Prostate gland (tissue), 2 donors: ENCODE measurements at regions of chr6 and their contacts with region 1.

Region 1: DNA sequence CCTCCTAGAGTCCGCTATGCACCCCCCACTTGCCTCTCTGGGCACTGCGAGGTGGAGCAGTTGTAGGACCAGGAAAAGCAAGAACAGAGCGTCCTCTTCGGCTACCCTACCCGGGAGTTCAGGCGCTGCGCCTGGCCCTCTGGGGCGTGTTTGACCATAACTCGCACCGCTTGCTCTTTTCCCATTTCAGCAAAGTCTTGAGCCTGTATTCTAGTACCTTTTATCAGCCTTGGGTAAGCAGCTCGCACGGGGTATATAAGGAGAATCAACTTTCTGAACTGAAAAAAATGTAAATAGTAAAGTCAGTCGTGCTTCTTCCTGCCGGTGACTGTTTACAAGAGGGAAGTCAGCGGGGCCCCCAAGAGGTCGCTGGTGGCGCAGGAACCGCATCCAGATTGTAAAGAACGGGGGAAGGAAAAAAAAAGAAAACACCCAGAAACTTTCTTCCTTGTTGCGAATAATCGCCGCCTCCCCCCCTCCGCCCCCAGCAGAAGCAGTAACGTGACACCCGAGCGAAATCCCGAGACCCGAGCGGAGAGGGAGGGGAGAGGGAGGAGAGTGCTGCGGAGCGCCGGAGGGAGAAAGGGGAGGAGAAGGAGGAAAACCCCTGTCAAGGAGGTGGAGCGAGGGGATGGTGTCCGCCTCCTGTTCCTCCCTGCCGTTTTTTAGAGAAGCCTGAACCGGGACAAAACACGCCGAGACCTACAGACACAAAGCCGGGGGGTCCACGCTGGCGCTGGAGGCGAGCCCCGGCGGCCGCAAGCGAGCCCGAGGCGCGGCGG is at the start of gene UST:
- DNase-seq: peak; percentile 87
- H3K4me3 ChIP-seq: peak within 1 kb of the TSS; percentile 61 to 65
- H3K27ac ChIP-seq: peak within 1 kb of the TSS; percentile 72 to 83
- H3K4me1 ChIP-seq: no peaks in the 10 kb centered on the region
- H3K27me3 ChIP-seq: no peaks in the 10 kb centered on the region
- CTCF ChIP-seq: peak; percentile 6 to 53 (median 43)
- POLR2A ChIP-seq: peak; percentile 65
- total RNA-seq, gene UST: 6.6 to 12.9 TPM

Region 2: GRCh38 chr6:147407571-147407970 is 1339.0 kb before region 1 on chr6:
- intact Hi-C with region 1: no loop called
- DNase-seq: no peak
- H3K4me3 ChIP-seq: no peak overlapping the region
- H3K27ac ChIP-seq: no peak overlapping the region
- H3K4me1 ChIP-seq: no peaks in the 10 kb centered on the region
- H3K27me3 ChIP-seq: no peaks in the 10 kb centered on the region
- CTCF ChIP-seq: no peak
- POLR2A ChIP-seq: no peak

Region 3: GRCh38 chr6:148578245-148578732 is 168.3 kb before region 1 on chr6:
- intact Hi-C with region 1: loop called (anchors 10 kb)
- DNase-seq: peak; percentile 66
- H3K4me3 ChIP-seq: no peak overlapping the region
- H3K27ac ChIP-seq: no peak overlapping the region
- H3K4me1 ChIP-seq: no peaks in the 10 kb centered on the region
- H3K27me3 ChIP-seq: no peaks in the 10 kb centered on the region
- CTCF ChIP-seq: peak; percentile 46 to 75 (median 66)
- POLR2A ChIP-seq: no peak

Region 4: GRCh38 chr6:148947621-148948444 is 201.3 kb after region 1 on chr6:
- intact Hi-C with region 1: loop called (anchors 2 kb)
- DNase-seq: peak; percentile 84
- H3K4me3 ChIP-seq: no peak overlapping the region
- H3K27ac ChIP-seq: no peak overlapping the region
- H3K4me1 ChIP-seq: no peaks in the 10 kb centered on the region
- H3K27me3 ChIP-seq: no peaks in the 10 kb centered on the region
- CTCF ChIP-seq: peak; percentile 67 to 87 (median 84)
- POLR2A ChIP-seq: no peak